Endothelial cell of umbilical vein (primary cell): ENCODE measurements at regions of chr1 and their contacts with region 1.

Region 1: DNA sequence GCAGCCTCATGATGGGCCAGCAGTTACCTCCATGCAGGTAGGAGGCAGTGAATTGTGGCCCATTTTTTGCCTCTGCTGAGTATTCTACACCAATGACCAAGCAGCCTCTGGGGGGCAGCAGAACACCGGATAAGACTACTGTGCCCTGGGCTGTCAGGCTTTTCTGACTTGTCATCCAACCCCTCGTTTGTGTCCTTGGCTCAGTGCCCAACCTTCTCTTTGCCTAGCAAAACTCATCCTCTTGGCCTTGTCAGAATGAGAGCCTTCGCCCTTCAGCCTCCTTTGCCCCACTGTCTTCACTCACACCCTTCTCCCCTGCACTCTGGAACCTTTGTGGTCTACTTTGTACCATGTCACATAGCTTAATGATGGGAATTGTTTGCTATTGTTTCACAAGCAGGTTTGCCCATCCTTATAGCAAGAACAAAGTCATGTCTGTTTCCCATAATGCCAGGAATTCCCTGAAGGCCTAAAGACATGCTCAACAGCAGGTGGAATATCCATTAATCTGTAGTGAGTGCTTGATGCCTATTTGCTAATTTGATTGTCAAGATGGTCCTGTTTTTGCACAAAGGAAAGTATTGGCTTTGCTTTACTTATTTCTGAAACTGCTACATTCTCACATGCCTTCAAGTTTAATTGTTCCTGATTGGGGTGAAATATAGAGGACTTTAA is 255.9 kb downstream of the HHAT start:
- DNase-seq: peak; percentile 27
- H3K4me3 ChIP-seq: no peak overlapping the region
- H3K27ac ChIP-seq: no peak overlapping the region
- H3K4me1 ChIP-seq: no peaks in the 10 kb centered on the region
- H3K27me3 ChIP-seq: no peaks in the 10 kb centered on the region
- CTCF ChIP-seq: peak; percentile 40
- POLR2A ChIP-seq: no peak

Region 2: DNA sequence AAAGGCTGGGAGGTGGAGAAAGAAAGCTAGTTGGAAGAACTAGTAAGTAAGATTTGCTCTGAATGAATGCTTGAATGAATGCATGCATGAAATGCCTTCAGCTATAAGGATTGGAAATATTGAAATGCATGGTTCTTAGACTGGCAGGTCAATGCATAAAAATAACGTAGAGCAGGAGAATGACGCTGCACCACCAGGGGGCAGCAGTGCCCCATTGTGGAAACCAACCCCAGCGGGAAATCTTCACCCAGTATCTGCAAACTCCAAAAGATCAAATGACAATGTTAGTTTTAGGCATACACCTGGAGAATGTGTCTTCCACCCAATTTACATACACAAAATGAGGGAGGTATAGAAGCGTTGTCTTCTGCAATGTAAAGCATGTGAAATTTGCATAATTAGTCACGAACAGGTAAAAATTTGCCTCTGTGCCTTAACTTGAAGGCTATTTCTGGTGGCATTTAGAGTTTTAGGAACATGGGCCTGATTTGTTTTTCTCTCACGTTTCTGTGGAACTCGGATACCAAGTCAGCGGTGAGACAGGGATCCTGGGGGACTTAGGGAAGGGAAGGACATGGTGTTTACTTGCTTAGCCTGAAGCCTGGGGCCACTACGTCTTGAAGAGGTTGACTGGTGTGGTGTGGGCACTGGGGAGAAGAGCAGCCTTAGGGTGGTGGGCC is 177.2 kb before region 1 on chr1:
- CTCF ChIA-PET with region 1: no interaction called
- POLR2A ChIA-PET with region 1: no interaction called
- dilution Hi-C with region 1: no loop called
- intact Hi-C with region 1: loop called (anchors 1 kb)
- DNase-seq: peak; percentile 61
- H3K4me3 ChIP-seq: no peak overlapping the region
- H3K27ac ChIP-seq: no peak overlapping the region
- H3K4me1 ChIP-seq: no peaks in the 10 kb centered on the region
- H3K27me3 ChIP-seq: peaks cover 3 to 11% of the 10 kb centered on the region in 2 experiments
- CTCF ChIP-seq: peak; percentile 83 to 95
- POLR2A ChIP-seq: no peak

Region 3: GRCh38 chr1:210597555-210598134 is 13.1 kb after region 1 on chr1:
- CTCF ChIA-PET with region 1: no interaction called
- POLR2A ChIA-PET with region 1: no interaction called
- dilution Hi-C with region 1: no loop called
- intact Hi-C with region 1: no loop called
- DNase-seq: no peak
- H3K4me3 ChIP-seq: no peak overlapping the region
- H3K27ac ChIP-seq: no peak overlapping the region
- H3K4me1 ChIP-seq: no peaks in the 10 kb centered on the region
- H3K27me3 ChIP-seq: no peaks in the 10 kb centered on the region
- CTCF ChIP-seq: no peak
- POLR2A ChIP-seq: no peak

Region 4: GRCh38 chr1:211476200-211476849 is 891.7 kb after region 1 on chr1:
- CTCF ChIA-PET with region 1: no interaction called
- POLR2A ChIA-PET with region 1: no interaction called
- dilution Hi-C with region 1: no loop called
- intact Hi-C with region 1: loop called (anchors 1 kb)
- DNase-seq: peak; percentile 69
- H3K4me3 ChIP-seq: no peak overlapping the region
- H3K27ac ChIP-seq: no peak overlapping the region
- H3K4me1 ChIP-seq: no peaks in the 10 kb centered on the region
- H3K27me3 ChIP-seq: peaks cover 19 to 38% of the 10 kb centered on the region in 2 experiments
- CTCF ChIP-seq: peak; percentile 87 to 88
- POLR2A ChIP-seq: no peak